ENCODE measurements at regions of chr1 and their contacts with region 1.

Region 1: GRCh38 chr1:15046487-15047165 is 106.9 kb upstream of the TMEM51 start:
- DNase-seq: no peak
- H3K4me3 ChIP-seq: no peak overlapping the region
- H3K27ac ChIP-seq: no peak overlapping the region
- H3K4me1 ChIP-seq: no peaks in the 10 kb centered on the region
- H3K27me3 ChIP-seq: no peaks in the 10 kb centered on the region
- CTCF ChIP-seq: peak; percentile 84 to 99 (median 90)
- POLR2A ChIP-seq: no peak

Region 2: DNA sequence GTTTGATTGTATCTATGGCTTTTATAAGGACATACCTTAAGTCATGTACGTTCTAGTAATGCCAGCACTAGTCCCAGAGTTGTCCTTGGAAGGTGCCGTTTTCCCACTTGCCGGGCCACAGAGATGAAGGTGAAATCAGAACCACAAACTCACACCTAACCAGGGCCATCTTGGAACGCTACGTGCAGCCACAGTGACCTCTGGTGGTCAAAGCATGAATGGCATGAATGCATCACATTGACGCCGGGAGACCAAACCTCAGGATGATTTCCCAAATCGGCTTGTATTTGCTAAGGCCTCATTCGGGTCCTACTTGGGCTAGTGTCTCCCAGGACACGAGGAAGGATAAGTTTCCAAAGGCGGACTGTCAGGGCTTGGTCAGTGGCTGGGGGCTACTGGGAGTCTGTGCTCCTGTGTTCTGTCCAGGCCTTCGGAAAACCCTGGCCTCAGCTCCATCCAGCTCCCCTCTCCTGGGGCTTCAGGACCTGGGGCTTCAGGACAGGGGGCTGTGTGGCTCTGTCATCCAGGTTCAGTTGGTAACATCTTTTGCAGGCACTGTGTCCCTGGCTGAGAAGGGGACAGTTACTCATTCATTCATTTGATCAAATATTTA is 1086.1 kb before region 1 on chr1:
- intact Hi-C with region 1: loop called (anchors 10 kb)
- DNase-seq: no peak
- H3K4me3 ChIP-seq: no peak overlapping the region
- H3K27ac ChIP-seq: no peak overlapping the region
- H3K4me1 ChIP-seq: no peaks in the 10 kb centered on the region
- H3K27me3 ChIP-seq: no peaks in the 10 kb centered on the region
- CTCF ChIP-seq: peak; percentile 81 to 98 (median 97)
- POLR2A ChIP-seq: no peak

Region 3: GRCh38 chr1:14113841-14114567 is 932.6 kb before region 1 on chr1:
- intact Hi-C with region 1: loop called (anchors 5 kb)
- DNase-seq: no peak
- H3K4me3 ChIP-seq: no peak overlapping the region
- H3K27ac ChIP-seq: no peak overlapping the region
- H3K4me1 ChIP-seq: no peaks in the 10 kb centered on the region
- H3K27me3 ChIP-seq: no peaks in the 10 kb centered on the region
- CTCF ChIP-seq: peak in 2 of 3 experiments; percentile 30 to 41
- POLR2A ChIP-seq: no peak

Region 4: DNA sequence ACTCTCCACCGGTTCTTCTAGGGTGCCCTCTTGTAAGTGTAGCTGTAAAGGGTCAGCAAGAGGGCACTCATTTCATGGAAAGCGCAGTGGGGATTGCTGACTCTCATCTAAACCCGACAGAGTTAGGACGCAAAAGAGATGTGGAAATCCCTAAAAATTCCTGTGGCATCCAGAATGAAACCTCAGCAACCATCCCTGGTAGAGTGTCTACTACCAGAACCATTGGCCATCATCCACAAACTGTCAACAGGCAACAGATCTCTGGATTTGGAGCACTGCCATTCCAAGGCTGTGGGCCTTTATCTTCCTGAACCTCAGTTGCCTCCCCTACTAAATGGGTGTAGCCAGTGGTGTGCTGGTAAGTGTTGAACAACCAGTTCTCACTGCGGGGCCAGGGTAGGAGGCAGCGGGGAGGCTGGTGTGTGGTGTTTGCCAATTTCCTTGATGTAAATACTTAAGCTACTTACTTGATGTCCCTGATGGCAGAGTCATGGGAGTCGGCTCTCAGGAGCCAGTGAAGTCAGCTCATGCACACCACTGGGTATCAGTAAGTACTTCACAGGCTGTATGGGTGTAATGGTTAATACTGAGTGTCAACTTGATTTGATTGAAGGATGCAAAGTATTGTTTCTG is 252.4 kb before region 1 on chr1:
- intact Hi-C with region 1: loop called (anchors 10 kb)
- DNase-seq: no peak
- H3K4me3 ChIP-seq: no peak overlapping the region
- H3K27ac ChIP-seq: no peak overlapping the region
- H3K4me1 ChIP-seq: no peaks in the 10 kb centered on the region
- H3K27me3 ChIP-seq: no peaks in the 10 kb centered on the region
- CTCF ChIP-seq: no peak
- POLR2A ChIP-seq: no peak

Region 5: GRCh38 chr1:16971341-16972188 is 1924.9 kb after region 1 on chr1:
- intact Hi-C with region 1: no loop called
- DNase-seq: no peak
- H3K4me3 ChIP-seq: no peak overlapping the region
- H3K27ac ChIP-seq: peak overlapping the region; percentile 25
- H3K4me1 ChIP-seq: peaks cover 27% of the 10 kb centered on the region
- H3K27me3 ChIP-seq: no peaks in the 10 kb centered on the region
- CTCF ChIP-seq: no peak
- POLR2A ChIP-seq: no peak

Measured in vagina (tissue), 2 donors.